Natural killer cell (primary cell): ENCODE measurements at regions of chr13 and their contacts with region 1.

Region 1: GRCh38 chr13:45047394-45048310 is 58.3 kb downstream of the GPALPP1 start:
- DNase-seq: peak; percentile 59 to 89
- ATAC-seq: peak; percentile 87 to 98 (median 94)
- H3K4me3 ChIP-seq: no peak overlapping the region
- H3K4me3 Mint-ChIP-seq: peak overlapping the region; percentile 84
- H3K27ac ChIP-seq: no peak overlapping the region
- H3K27ac Mint-ChIP-seq: no peak overlapping the region
- H3K4me1 ChIP-seq: peaks cover 9% of the 10 kb centered on the region
- H3K4me1 Mint-ChIP-seq: peaks cover 7% of the 10 kb centered on the region in 2 donors
- H3K27me3 ChIP-seq: no peaks in the 10 kb centered on the region
- H3K27me3 Mint-ChIP-seq: peaks cover 0 to 9% of the 10 kb centered on the region in 2 donors
- CTCF ChIP-seq: peak; percentile 78

Region 2: DNA sequence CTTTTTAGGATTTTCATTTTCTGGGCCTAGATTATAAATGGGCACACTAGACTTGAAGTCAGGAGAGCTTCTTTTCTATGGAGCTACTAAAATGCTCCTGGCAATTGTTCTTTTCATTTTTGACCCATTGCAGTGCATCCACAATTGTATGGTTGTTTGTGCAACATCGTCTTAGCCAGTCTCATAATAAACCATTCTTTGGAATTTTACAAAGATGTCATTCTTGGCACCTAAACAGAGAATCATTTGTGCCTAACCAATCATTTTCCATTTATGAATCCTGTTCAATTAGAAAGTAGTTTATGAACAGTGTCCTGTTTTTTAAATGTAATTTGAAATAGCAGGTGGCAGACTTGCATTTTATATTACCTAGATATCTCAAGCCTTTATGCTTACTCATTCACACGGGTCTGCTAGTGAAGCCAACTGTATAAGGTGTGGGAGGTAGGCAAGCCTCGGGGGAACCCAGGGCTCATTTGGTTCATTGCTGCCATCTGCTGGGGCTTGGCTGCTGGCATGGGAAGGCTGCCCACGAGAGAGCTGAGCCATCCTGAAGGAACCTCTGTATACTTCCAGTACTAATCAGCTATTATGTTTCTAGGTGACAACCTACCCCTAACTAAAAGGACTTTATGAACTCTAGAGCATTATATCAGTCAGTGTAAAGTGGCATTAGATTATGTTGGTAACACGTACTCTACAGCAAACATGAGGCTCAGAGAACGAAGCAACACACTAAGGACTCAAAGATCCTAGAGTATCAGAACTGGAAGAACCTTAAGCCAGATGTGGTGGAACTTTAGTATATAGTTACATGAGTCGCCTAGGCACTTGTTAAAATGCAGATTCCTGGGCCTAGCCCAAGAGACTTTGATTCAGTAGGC is 233.3 kb after region 1 on chr13:
- intact Hi-C with region 1: loop called (anchors 1 kb)
- DNase-seq: peak in 1 of 2 donors; percentile 59
- ATAC-seq: peak; percentile 43 to 78 (median 73)
- H3K4me3 ChIP-seq: no peak overlapping the region
- H3K4me3 Mint-ChIP-seq: no peak overlapping the region
- H3K27ac ChIP-seq: no peak overlapping the region
- H3K27ac Mint-ChIP-seq: no peak overlapping the region
- H3K4me1 ChIP-seq: no peaks in the 10 kb centered on the region
- H3K4me1 Mint-ChIP-seq: peaks cover 0 to 7% of the 10 kb centered on the region in 2 donors
- H3K27me3 ChIP-seq: no peaks in the 10 kb centered on the region
- H3K27me3 Mint-ChIP-seq: no peaks in the 10 kb centered on the region
- CTCF ChIP-seq: peak; percentile 13

Region 3: GRCh38 chr13:45310341-45311125 is 262.9 kb after region 1 on chr13:
- intact Hi-C with region 1: loop called (anchors 1 kb)
- DNase-seq: no peak
- ATAC-seq: no peak
- H3K4me3 ChIP-seq: peak overlapping the region; percentile 46
- H3K4me3 Mint-ChIP-seq: peak overlapping the region; percentile 87
- H3K27ac ChIP-seq: no peak overlapping the region
- H3K27ac Mint-ChIP-seq: peak overlapping the region in 1 of 2 donors; percentile 78
- H3K4me1 ChIP-seq: peaks cover 22% of the 10 kb centered on the region
- H3K4me1 Mint-ChIP-seq: peaks cover 18 to 19% of the 10 kb centered on the region in 2 donors
- H3K27me3 ChIP-seq: no peaks in the 10 kb centered on the region
- H3K27me3 Mint-ChIP-seq: peaks cover 0 to 3% of the 10 kb centered on the region in 2 donors
- CTCF ChIP-seq: no peak

Region 4: GRCh38 chr13:45393941-45394570 is 346.4 kb after region 1 on chr13:
- intact Hi-C with region 1: loop called (anchors 10 kb)
- DNase-seq: peak in 1 of 2 donors; percentile 66
- ATAC-seq: peak in 2 of 3 donors; percentile 36 to 45
- H3K4me3 ChIP-seq: no peak overlapping the region
- H3K4me3 Mint-ChIP-seq: no peak overlapping the region
- H3K27ac ChIP-seq: no peak overlapping the region
- H3K27ac Mint-ChIP-seq: peak overlapping the region; percentile 53 to 83
- H3K4me1 ChIP-seq: peaks cover 20% of the 10 kb centered on the region
- H3K4me1 Mint-ChIP-seq: peaks cover 32 to 37% of the 10 kb centered on the region in 2 donors
- H3K27me3 ChIP-seq: no peaks in the 10 kb centered on the region
- H3K27me3 Mint-ChIP-seq: no peaks in the 10 kb centered on the region
- CTCF ChIP-seq: peak; percentile 37

Region 5: DNA sequence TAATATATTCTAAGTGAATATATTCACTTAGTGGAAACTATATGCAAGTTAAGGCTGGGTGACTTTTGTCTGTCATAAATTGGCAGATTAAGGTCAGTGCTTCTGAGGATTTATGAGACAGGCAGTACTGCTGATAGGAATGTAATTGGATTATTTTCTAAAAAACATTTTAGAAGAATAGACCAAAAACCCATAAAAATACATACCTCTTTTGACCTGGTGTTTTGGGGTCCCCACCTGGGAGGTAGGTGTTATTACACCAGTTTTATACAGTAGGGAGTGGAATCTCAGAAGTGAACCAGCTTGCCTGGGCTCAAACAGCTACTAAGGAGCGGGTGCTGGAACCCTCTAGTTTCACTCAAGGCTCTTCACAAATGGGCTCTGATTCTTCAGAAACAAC is 442.4 kb after region 1 on chr13:
- intact Hi-C with region 1: loop called (anchors 10 kb)
- DNase-seq: peak in 1 of 2 donors; percentile 63
- ATAC-seq: peak in 2 of 3 donors; percentile 55 to 57
- H3K4me3 ChIP-seq: no peak overlapping the region
- H3K4me3 Mint-ChIP-seq: no peak overlapping the region
- H3K27ac ChIP-seq: no peak overlapping the region
- H3K27ac Mint-ChIP-seq: no peak overlapping the region
- H3K4me1 ChIP-seq: no peaks in the 10 kb centered on the region
- H3K4me1 Mint-ChIP-seq: peaks cover 0 to 6% of the 10 kb centered on the region in 2 donors
- H3K27me3 ChIP-seq: no peaks in the 10 kb centered on the region
- H3K27me3 Mint-ChIP-seq: no peaks in the 10 kb centered on the region
- CTCF ChIP-seq: peak; percentile 38